GM12878 (cell line): ENCODE measurements at regions of chr2 and their contacts with region 1.

Region 1: DNA sequence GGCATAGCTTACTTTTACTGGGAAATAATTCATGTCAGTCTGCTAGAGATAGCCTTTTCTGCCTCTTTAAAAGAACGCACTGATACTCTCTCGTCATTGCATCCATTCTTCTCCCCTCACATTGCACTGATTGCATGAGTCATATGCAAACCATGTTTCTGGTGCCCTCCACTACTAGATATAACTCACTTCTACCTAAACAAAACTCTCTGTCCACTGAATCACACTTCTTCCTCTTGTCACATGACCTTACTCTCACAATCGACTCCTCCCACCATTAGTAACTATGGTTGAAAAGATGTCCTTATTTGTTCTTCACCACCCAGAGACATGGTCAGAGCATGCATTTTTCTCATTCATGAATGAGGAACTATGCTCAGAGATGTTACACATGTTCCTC is 158.0 kb downstream of the CSRNP3 start:
- DNase-seq: no peak
- ATAC-seq: peak; percentile 74
- H3K4me3 ChIP-seq: no peak overlapping the region
- H3K27ac ChIP-seq: no peak overlapping the region
- H3K4me1 ChIP-seq: no peaks in the 10 kb centered on the region
- H3K27me3 ChIP-seq: no peaks in the 10 kb centered on the region
- CTCF ChIP-seq: no peak
- EP300 ChIP-seq: no peak
- POLR2A ChIP-seq: no peak
- RAD21 ChIP-seq: no peak

Region 2: DNA sequence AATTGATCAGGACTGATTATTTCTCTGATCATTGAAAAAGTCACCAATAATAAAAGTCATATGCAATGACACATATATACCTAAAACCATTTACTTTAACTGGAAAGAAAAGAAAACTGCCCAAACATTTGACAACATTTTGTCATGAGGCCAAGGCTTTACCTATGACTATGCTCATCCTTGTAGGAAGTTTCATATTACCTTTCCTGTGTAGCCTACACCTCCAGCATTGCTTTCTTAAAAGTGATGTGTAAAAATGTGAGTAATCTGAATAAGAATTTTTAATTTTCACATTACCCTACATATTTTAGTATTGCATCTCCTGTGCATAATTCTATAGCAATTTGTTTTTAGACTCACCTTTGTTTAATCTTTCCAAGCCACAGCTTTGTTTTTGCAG is 1471.9 kb before region 1 on chr2:
- CTCF ChIA-PET with region 1: no interaction called
- POLR2A ChIA-PET with region 1: no interaction called
- RAD21 ChIA-PET with region 1: no interaction called
- SMC1A ChIA-PET with region 1: no interaction called
- in situ Hi-C with region 1: no loop called
- intact Hi-C with region 1: no loop called
- DNase-seq: no peak
- ATAC-seq: no peak
- H3K4me3 ChIP-seq: no peak overlapping the region
- H3K27ac ChIP-seq: no peak overlapping the region
- H3K4me1 ChIP-seq: no peaks in the 10 kb centered on the region
- H3K27me3 ChIP-seq: no peaks in the 10 kb centered on the region
- CTCF ChIP-seq: no peak
- EP300 ChIP-seq: no peak
- POLR2A ChIP-seq: no peak
- RAD21 ChIP-seq: no peak

Region 3: DNA sequence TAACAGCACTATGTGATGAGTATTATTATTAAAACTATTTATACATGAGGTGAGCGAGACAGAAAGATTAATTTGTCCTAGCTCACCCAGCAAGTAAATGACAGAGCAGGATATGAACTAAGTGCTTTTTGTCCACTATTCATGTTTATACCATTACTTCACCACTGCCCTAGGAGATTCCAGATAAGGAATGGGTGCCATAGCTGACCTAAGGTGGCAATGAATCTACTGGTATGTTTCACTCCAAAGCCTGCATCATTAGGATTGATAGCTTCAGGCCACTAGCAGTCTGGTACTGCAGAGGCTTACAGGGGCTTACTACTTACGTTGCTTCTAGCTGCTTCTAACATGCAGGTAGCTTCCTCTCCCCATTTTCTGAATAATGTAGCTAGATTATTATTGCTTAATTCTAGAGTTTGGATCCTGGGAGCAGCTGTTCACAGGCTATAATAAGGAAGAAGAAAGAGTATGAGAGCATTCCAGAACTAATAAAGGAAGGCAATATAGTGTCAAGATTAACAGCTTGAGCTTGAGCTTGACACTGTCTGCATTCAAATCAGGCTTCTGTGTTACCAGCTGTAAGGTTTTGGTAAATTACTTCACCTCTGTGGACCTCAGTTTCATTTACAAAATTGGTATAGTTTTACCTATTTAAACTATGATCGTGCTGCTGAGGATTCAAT is 12.9 kb after region 1 on chr2:
- CTCF ChIA-PET with region 1: interaction called, 6 read pairs
- POLR2A ChIA-PET with region 1: interaction called, 3 read pairs
- RAD21 ChIA-PET with region 1: interaction called, 3 read pairs
- SMC1A ChIA-PET with region 1: interaction called, 61 read pairs
- in situ Hi-C with region 1: no loop called
- intact Hi-C with region 1: no loop called
- DNase-seq: no peak
- ATAC-seq: peak; percentile 43; the same call in 2 of the 3 replicates
- H3K4me3 ChIP-seq: no peak overlapping the region
- H3K27ac ChIP-seq: no peak overlapping the region
- H3K4me1 ChIP-seq: no peaks in the 10 kb centered on the region
- H3K27me3 ChIP-seq: no peaks in the 10 kb centered on the region
- CTCF ChIP-seq: no peak
- EP300 ChIP-seq: no peak
- POLR2A ChIP-seq: no peak
- RAD21 ChIP-seq: no peak